ENCODE measurements at regions of chr4 and their contacts with region 1.

Region 1: GRCh38 chr4:150867148-150867547 is 147.9 kb downstream of the LRBA start:
- DNase-seq: peak; percentile 44 to 86 (median 62)
- ATAC-seq: peak; percentile 93
- H3K4me3 ChIP-seq: no peak overlapping the region
- H3K27ac ChIP-seq: no peak overlapping the region
- H3K4me1 ChIP-seq: no peaks in the 10 kb centered on the region
- H3K27me3 ChIP-seq: no peaks in the 10 kb centered on the region
- CTCF ChIP-seq: peak; percentile 40 to 78 (median 50); a peak in 4 of 6 replicates
- EP300 ChIP-seq: no peak
- POLR2A ChIP-seq: no peak
- RAD21 ChIP-seq: peak; percentile 71 to 83

Region 2: DNA sequence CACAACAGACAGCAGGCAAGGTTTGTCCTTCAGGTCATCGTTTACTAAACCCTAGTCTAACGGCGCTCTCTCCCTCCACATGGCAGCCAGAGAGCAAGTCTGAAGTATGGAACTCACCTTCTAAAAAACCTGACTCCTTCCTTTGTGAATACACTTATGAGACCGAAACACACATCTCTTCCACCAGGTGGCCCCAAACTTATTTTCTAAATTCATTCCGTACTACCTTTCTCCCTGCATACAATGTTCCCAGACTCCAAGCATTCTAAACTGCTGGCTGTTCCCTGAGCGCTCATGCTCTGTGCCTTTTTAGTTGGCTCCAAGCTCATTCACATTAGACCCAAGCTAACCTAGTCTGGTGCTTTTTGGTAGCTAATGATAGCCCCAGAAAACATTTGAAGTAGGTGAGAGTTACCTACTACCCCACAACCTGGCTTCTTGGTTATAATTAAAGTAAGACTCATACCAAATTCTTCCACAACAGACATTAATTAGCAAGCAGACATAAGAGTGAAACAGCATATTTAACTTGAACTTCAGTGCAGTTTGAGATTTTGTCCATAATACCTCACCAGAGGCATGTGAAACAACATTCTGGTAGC is 856.5 kb before region 1 on chr4:
- CTCF ChIA-PET with region 1: no interaction called
- POLR2A ChIA-PET with region 1: no interaction called
- in situ Hi-C with region 1: loop called (anchors 25 kb)
- intact Hi-C with region 1: loop called (anchors 10 kb)
- DNase-seq: peak; percentile 12 to 41 (median 18)
- ATAC-seq: peak; percentile 87
- H3K4me3 ChIP-seq: no peak overlapping the region
- H3K27ac ChIP-seq: no peak overlapping the region
- H3K4me1 ChIP-seq: no peaks in the 10 kb centered on the region
- H3K27me3 ChIP-seq: no peaks in the 10 kb centered on the region
- CTCF ChIP-seq: peak; percentile 28 to 49 (median 47); a peak in 4 of 6 replicates
- EP300 ChIP-seq: no peak
- POLR2A ChIP-seq: no peak
- RAD21 ChIP-seq: peak in 1 of 2 experiments; percentile 43; a peak in 2 of 4 replicates

Region 3: GRCh38 chr4:150248181-150248580 is 619.0 kb before region 1 on chr4:
- CTCF ChIA-PET with region 1: interaction called, 5 read pairs
- POLR2A ChIA-PET with region 1: no interaction called
- in situ Hi-C with region 1: no loop called
- intact Hi-C with region 1: loop called (anchors 5 kb)
- DNase-seq: peak in 1 of 4 experiments; percentile 24
- ATAC-seq: peak; percentile 77
- H3K4me3 ChIP-seq: no peak overlapping the region
- H3K27ac ChIP-seq: no peak overlapping the region
- H3K4me1 ChIP-seq: no peaks in the 10 kb centered on the region; a peak in 1 of 5 replicates
- H3K27me3 ChIP-seq: no peaks in the 10 kb centered on the region
- CTCF ChIP-seq: peak in 2 of 3 experiments; percentile 17 to 33; a peak in 2 of 6 replicates
- EP300 ChIP-seq: no peak
- POLR2A ChIP-seq: no peak
- RAD21 ChIP-seq: peak in 1 of 2 experiments; percentile 55; a peak in 2 of 4 replicates

Region 4: GRCh38 chr4:150609101-150609500 is 258.0 kb before region 1 on chr4:
- CTCF ChIA-PET with region 1: no interaction called
- POLR2A ChIA-PET with region 1: no interaction called
- in situ Hi-C with region 1: no loop called
- intact Hi-C with region 1: loop called (anchors 10 kb)
- DNase-seq: no peak
- ATAC-seq: no peak
- H3K4me3 ChIP-seq: no peak overlapping the region
- H3K27ac ChIP-seq: no peak overlapping the region
- H3K4me1 ChIP-seq: no peaks in the 10 kb centered on the region
- H3K27me3 ChIP-seq: no peaks in the 10 kb centered on the region
- CTCF ChIP-seq: no peak
- EP300 ChIP-seq: no peak
- POLR2A ChIP-seq: no peak
- RAD21 ChIP-seq: no peak

Region 5: DNA sequence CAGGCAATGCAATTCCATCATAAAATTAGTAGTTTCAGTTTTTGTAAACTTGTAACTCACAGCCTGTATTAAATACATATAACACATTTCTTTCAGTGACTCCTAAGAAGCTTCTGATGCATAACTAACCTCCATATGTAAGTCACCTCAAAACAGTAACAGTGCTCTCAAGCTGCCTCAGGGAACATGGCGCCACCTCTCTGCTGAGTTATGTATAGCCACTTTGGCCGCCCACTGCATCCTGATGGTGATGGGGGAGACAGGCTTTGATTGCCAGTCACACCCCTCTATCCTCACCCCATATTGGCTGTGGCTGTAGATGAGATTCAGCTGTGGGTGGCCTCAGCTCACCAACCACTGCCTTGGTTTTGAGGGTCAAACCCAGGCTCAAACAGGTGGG is 93.7 kb after region 1 on chr4:
- CTCF ChIA-PET with region 1: no interaction called
- POLR2A ChIA-PET with region 1: no interaction called
- in situ Hi-C with region 1: no loop called
- intact Hi-C with region 1: loop called (anchors 5 kb)
- DNase-seq: peak; percentile 49 to 66 (median 58)
- ATAC-seq: peak; percentile 98
- H3K4me3 ChIP-seq: no peak overlapping the region
- H3K27ac ChIP-seq: no peak overlapping the region
- H3K4me1 ChIP-seq: no peaks in the 10 kb centered on the region; a peak in 1 of 5 replicates
- H3K27me3 ChIP-seq: no peaks in the 10 kb centered on the region
- CTCF ChIP-seq: peak; percentile 52 to 69 (median 67)
- EP300 ChIP-seq: no peak
- POLR2A ChIP-seq: no peak
- RAD21 ChIP-seq: peak in 1 of 2 experiments; percentile 54; a peak in 2 of 4 replicates